ENCODE measurements at regions of chr6 and their contacts with region 1.

Region 1: GRCh38 chr6:107847844-107848802 is 24.0 kb upstream of the SCML4 start:
- DNase-seq: peak; percentile 85
- ATAC-seq: peak; percentile 93
- H3K4me3 Mint-ChIP-seq: peak overlapping the region; percentile 69
- H3K27ac Mint-ChIP-seq: no peak overlapping the region
- H3K4me1 Mint-ChIP-seq: peaks cover 24% of the 10 kb centered on the region
- H3K27me3 Mint-ChIP-seq: peaks cover 2% of the 10 kb centered on the region

Region 2: DNA sequence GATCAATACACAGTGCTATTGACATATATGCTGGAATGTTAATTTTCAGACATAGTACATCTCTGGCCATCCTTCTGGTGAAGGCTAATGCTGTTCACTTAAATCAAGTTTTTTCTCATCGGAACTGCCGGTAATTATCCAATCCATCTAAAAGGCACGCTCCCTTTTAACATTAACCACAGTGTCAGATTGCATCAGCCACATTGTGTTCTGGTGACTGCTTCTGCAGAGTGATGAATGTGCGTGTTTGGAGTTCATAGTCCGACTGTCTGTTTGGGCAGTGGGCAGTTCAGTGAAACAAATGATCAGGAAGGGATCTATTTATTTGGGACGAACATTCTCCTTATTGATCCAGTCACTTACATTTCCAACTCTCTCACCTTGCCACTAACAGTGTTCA is 308.7 kb before region 1 on chr6:
- CTCF ChIA-PET with region 1: no interaction called
- DNase-seq: no peak
- ATAC-seq: no peak
- H3K4me3 Mint-ChIP-seq: no peak overlapping the region
- H3K27ac Mint-ChIP-seq: no peak overlapping the region
- H3K4me1 Mint-ChIP-seq: no peaks in the 10 kb centered on the region
- H3K27me3 Mint-ChIP-seq: peaks cover 24% of the 10 kb centered on the region

Region 3: DNA sequence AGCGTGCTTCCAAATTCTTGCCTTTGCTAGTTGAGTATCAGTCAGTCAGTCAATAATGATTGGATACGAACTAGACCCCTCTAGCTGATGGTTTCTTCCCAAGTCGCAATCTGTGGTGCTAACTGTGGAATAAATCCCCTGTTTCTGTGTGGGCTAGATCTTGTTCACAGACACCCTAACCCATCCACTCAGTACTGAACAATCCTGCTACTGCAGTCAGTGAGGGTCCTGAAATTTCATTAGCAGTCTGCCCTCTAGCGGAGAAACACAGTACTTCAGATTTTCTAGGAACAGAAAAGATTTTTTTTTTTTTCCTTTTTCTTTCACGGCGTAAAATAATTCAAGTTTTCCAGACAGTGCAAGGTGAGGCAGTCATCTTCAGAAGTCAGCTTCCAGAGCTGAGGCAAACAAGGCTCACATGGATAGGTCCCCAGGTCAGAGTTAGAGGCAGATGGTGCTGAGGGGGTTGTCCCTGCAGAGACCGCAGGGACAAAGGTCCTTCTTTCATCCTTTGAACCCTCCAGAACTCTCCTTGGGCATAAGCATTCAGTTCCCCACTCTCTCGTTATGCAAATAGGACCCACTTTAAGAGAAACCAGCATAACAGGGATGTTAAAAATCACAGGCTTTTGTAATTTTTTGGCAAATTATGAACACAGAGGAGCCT is 143.6 kb before region 1 on chr6:
- CTCF ChIA-PET with region 1: interaction called, 13 read pairs
- DNase-seq: no peak
- ATAC-seq: peak; percentile 33
- H3K4me3 Mint-ChIP-seq: no peak overlapping the region
- H3K27ac Mint-ChIP-seq: no peak overlapping the region
- H3K4me1 Mint-ChIP-seq: peaks cover 8% of the 10 kb centered on the region
- H3K27me3 Mint-ChIP-seq: no peaks in the 10 kb centered on the region

Region 4: DNA sequence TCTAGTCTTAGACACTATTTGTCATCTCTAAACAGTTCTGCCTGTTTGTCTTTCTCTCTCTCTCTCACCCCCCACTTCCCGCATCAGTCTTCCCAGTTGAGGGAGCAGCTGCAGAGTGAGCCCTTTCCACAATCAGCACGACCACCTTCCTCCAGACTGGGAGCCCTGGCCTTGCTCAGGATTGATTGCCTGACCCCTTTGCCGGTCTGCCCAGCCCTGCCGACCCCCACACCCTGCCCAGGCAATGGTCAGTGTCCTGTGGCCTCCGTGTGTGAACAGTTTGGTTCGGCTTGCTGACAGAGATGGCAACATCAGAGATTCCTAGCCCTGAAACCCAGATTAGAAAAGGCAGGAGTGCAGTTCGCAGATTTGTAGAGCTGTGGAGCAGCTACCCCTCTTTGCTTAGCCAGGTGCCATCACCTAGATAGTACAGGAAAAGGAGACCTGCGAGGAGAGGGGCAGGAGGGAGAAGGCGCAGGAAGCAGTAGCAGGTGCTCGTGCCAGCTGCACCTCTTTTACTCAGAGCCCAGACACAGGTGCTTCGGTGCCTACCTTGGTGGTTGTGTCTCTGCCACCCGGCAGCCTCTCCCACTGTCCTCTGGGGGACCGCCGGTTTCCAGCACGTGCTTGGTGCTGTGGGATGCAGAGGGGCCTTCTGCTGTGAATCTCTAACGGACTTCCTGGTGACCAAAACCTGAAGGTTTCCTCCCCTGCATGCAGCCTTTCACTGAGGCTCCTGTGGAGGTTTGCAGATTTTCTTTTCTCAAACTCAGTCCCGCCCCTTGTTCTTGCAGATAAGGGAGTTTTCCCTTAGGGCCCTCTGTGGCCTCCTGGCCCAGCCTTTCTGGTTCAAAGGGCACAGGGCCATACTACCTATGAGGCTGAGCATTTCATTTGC is 116.5 kb before region 1 on chr6:
- CTCF ChIA-PET with region 1: interaction called, 132 read pairs
- DNase-seq: peak; percentile 61
- ATAC-seq: peak; percentile 21
- H3K4me3 Mint-ChIP-seq: peak overlapping the region; percentile 90
- H3K27ac Mint-ChIP-seq: peak overlapping the region; percentile 85
- H3K4me1 Mint-ChIP-seq: peaks cover 77% of the 10 kb centered on the region
- H3K27me3 Mint-ChIP-seq: no peaks in the 10 kb centered on the region

Region 5: GRCh38 chr6:107786709-107787588 is 61.2 kb before region 1 on chr6:
- CTCF ChIA-PET with region 1: interaction called, 25 read pairs
- DNase-seq: peak; percentile 79
- ATAC-seq: peak; percentile 89
- H3K4me3 Mint-ChIP-seq: peak overlapping the region; percentile 65
- H3K27ac Mint-ChIP-seq: peak overlapping the region; percentile 86
- H3K4me1 Mint-ChIP-seq: peaks cover 54% of the 10 kb centered on the region
- H3K27me3 Mint-ChIP-seq: no peaks in the 10 kb centered on the region

Region 6: DNA sequence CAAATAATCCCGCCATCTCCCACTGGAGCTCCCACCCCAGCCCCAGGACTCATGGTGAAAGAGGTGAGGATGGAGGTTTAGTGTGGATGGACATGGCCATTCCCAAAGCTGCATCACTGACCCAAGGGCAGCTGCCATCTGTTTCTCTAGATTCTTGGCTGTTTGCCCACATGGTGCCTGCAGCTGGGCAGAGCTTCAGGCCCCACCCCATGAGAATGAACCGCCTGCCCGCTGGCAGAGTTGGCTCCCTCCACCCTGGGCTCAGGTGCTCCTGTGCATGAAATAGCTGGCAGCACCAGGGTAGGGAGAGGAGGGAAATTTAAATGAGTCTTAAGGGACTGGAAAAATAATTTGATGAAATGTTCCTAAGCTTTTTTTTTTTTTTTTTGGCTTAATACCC is 41.4 kb before region 1 on chr6:
- CTCF ChIA-PET with region 1: interaction called, 23 read pairs
- DNase-seq: no peak
- ATAC-seq: no peak
- H3K4me3 Mint-ChIP-seq: no peak overlapping the region
- H3K27ac Mint-ChIP-seq: no peak overlapping the region
- H3K4me1 Mint-ChIP-seq: peaks cover 26% of the 10 kb centered on the region
- H3K27me3 Mint-ChIP-seq: no peaks in the 10 kb centered on the region

Region 7: DNA sequence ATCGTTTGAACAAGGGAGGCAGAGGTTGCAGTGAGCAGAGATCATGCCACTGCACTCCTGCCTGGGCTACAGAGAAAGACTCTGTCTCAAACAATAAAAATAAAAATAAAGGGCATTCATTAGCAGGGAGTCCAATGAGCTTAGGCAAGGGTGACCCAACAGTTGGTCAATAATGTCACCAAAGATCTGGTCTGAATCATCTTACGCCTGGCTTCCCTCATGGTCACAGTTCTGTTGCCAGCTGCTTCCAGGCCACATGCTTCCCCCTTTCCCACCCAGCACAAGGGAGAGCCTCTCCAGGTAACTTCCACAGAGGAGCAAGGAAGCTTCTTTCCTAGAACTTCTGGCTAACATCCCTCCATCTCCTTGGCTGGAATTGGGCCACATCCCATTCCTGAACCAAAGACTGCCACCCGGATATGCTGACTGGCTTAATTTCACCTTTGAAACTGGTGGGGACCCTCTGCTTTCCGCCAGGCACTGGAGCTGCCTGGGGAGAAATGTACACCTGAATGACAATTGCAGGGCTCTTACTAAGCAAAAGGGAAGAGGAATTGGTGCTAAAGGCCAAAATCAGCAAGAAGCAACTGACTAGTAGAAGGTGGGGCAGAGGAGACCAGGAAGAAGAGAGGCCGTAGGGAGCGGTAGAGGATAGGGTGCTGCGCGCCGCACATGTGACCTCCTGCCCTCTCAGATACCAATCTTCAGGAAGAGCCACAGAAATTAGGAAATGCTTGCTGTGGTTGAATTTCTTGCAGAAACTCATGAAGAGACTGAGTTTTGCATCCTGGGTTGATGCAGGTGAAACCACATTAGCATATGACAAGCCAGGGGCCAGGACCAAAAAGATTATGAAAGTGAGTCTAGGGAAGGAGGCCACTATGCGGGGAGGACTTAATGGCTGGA is 15.7 kb before region 1 on chr6:
- CTCF ChIA-PET with region 1: interaction called, 91 read pairs
- DNase-seq: no peak
- ATAC-seq: no peak
- H3K4me3 Mint-ChIP-seq: no peak overlapping the region
- H3K27ac Mint-ChIP-seq: no peak overlapping the region
- H3K4me1 Mint-ChIP-seq: peaks cover 15% of the 10 kb centered on the region
- H3K27me3 Mint-ChIP-seq: no peaks in the 10 kb centered on the region

Region 8: GRCh38 chr6:108027594-108027993 is 179.5 kb after region 1 on chr6:
- CTCF ChIA-PET with region 1: no interaction called
- DNase-seq: no peak
- ATAC-seq: no peak
- H3K4me3 Mint-ChIP-seq: no peak overlapping the region
- H3K27ac Mint-ChIP-seq: no peak overlapping the region
- H3K4me1 Mint-ChIP-seq: no peaks in the 10 kb centered on the region
- H3K27me3 Mint-ChIP-seq: no peaks in the 10 kb centered on the region

Measured in activated CD8-positive, alpha-beta memory T cell treated with anti-CD3 and anti-CD28 coated beads, Interleukin-2, amount 10 ng/mL, durations not matched to agents 7 days and 5 days (primary cell).